Naive thymus-derived CD4-positive, alpha-beta T cell (primary cell): ENCODE measurements at regions of chr1 and their contacts with region 1.

Region 1: GRCh38 chr1:203649999-203650855 is 23.6 kb downstream of the ATP2B4 start:
- DNase-seq: peak; percentile 24 to 63 (median 32)
- ATAC-seq: peak; percentile 66
- H3K4me3 ChIP-seq: peak overlapping the region; percentile 47
- H3K4me3 Mint-ChIP-seq: peak overlapping the region; percentile 73 to 92 (median 82)
- H3K27ac ChIP-seq: peak overlapping the region; percentile 70
- H3K27ac Mint-ChIP-seq: peak overlapping the region; percentile 79 to 94 (median 91)
- H3K4me1 ChIP-seq: peaks cover 51 to 72% of the 10 kb centered on the region in 2 donors
- H3K4me1 Mint-ChIP-seq: peaks cover 39 to 78% (median 68%) of the 10 kb centered on the region in 7 donors
- H3K27me3 ChIP-seq: no peaks in the 10 kb centered on the region
- H3K27me3 Mint-ChIP-seq: no peaks in the 10 kb centered on the region

Region 2: GRCh38 chr1:203290261-203291089 is 359.8 kb before region 1 on chr1:
- CTCF ChIA-PET with region 1: interaction called, 3 read pairs
- POLR2A ChIA-PET with region 1: no interaction called
- intact Hi-C with region 1: loop called in 1 of 2 experiments (anchors 5 kb)
- DNase-seq: peak; percentile 95 to 98 (median 97)
- ATAC-seq: peak; percentile 76
- H3K4me3 ChIP-seq: peak overlapping the region; percentile 57
- H3K4me3 Mint-ChIP-seq: peak overlapping the region; percentile 75 to 89 (median 86)
- H3K27ac ChIP-seq: peak overlapping the region; percentile 98
- H3K27ac Mint-ChIP-seq: peak overlapping the region; percentile 97 to 100 (median 99)
- H3K4me1 ChIP-seq: peaks cover 54 to 58% of the 10 kb centered on the region in 2 donors
- H3K4me1 Mint-ChIP-seq: peaks cover 44 to 92% (median 86%) of the 10 kb centered on the region in 7 donors
- H3K27me3 ChIP-seq: no peaks in the 10 kb centered on the region
- H3K27me3 Mint-ChIP-seq: peaks cover 0 to 3% (median 0%) of the 10 kb centered on the region in 5 donors

Region 3: GRCh38 chr1:203390298-203390697 is 259.9 kb before region 1 on chr1:
- CTCF ChIA-PET with region 1: no interaction called
- POLR2A ChIA-PET with region 1: no interaction called
- intact Hi-C with region 1: no loop called
- DNase-seq: no peak
- ATAC-seq: no peak
- H3K4me3 ChIP-seq: no peak overlapping the region
- H3K4me3 Mint-ChIP-seq: no peak overlapping the region
- H3K27ac ChIP-seq: no peak overlapping the region
- H3K27ac Mint-ChIP-seq: no peak overlapping the region
- H3K4me1 ChIP-seq: no peaks in the 10 kb centered on the region
- H3K4me1 Mint-ChIP-seq: peaks cover 0 to 2% (median 0%) of the 10 kb centered on the region in 7 donors
- H3K27me3 ChIP-seq: no peaks in the 10 kb centered on the region
- H3K27me3 Mint-ChIP-seq: peaks cover 15 to 54% (median 32%) of the 10 kb centered on the region in 5 donors

Region 4: DNA sequence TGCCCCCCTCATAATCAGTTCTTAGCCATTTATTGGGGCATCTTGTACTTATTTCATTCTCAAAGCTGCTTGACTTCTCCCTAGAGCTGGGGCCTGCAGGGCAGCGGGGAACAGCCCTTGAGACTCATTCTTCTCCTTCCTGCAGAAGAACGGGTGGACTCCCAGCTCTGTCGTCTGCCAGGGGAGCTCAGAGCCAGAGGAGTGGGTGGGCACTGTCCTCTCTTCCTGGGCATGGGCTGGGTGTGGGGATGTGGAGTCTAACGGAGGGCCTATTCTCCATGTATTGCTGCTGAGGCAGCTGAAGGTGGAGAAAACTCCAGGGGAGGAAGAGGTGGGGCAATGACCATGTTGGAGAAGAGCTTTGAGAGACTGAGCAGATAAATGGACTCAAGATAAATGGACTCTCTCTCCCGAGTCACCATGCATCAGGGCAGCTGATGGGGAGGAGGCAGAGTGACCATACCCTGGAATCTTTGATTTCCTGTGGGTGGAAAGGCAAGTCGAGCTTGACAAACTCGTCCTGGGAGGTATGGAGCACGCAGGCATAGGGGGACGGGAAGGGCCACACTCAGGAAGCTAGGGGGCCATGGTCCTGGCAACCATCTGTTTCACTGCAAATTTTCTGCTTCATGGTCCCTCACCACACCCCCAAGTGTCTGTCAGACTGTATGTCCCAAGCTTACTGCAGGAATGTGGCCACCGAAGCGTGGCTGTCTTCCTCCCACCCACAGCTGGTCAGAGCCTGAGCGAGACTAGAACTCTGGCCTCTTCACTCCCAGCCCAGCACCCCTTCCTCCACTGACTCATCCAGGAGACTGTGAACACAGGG is 80.5 kb before region 1 on chr1:
- CTCF ChIA-PET with region 1: no interaction called
- POLR2A ChIA-PET with region 1: no interaction called
- intact Hi-C with region 1: no loop called
- DNase-seq: no peak
- ATAC-seq: no peak
- H3K4me3 ChIP-seq: no peak overlapping the region
- H3K4me3 Mint-ChIP-seq: no peak overlapping the region
- H3K27ac ChIP-seq: no peak overlapping the region
- H3K27ac Mint-ChIP-seq: no peak overlapping the region
- H3K4me1 ChIP-seq: no peaks in the 10 kb centered on the region
- H3K4me1 Mint-ChIP-seq: no peaks in the 10 kb centered on the region
- H3K27me3 ChIP-seq: no peaks in the 10 kb centered on the region
- H3K27me3 Mint-ChIP-seq: peaks cover 0 to 11% (median 0%) of the 10 kb centered on the region in 5 donors

Region 5: DNA sequence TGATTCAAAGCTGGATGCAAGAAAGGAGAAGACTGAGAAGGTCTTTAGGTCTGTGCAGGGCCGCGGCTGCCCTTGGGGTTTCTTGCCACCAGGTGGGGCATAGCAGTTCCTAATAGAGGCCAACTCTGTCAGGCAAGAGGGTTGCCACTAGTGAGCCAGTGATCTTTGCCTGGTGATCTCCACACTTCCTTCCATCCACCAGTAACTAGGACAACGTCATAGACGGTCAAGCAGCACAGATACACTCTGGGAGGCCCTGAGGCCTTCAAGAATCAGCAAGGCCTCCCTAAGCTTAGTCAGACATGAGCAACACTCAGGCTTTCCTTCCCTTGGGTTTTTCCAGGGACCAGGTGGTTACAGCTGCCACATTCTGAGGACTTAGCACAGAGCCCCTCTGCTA is 56.5 kb before region 1 on chr1:
- CTCF ChIA-PET with region 1: no interaction called
- POLR2A ChIA-PET with region 1: no interaction called
- intact Hi-C with region 1: no loop called
- DNase-seq: peak in 7 of 9 donors; percentile 17 to 42 (median 25)
- ATAC-seq: peak; percentile 79
- H3K4me3 ChIP-seq: no peak overlapping the region
- H3K4me3 Mint-ChIP-seq: no peak overlapping the region
- H3K27ac ChIP-seq: no peak overlapping the region
- H3K27ac Mint-ChIP-seq: peak overlapping the region in 4 of 9 donors; percentile 20 to 70 (median 50)
- H3K4me1 ChIP-seq: no peaks in the 10 kb centered on the region
- H3K4me1 Mint-ChIP-seq: peaks cover 0 to 32% (median 7%) of the 10 kb centered on the region in 7 donors
- H3K27me3 ChIP-seq: no peaks in the 10 kb centered on the region
- H3K27me3 Mint-ChIP-seq: peaks cover 0 to 4% (median 0%) of the 10 kb centered on the region in 5 donors

Region 6: GRCh38 chr1:203663294-203663693 is 13.1 kb after region 1 on chr1:
- CTCF ChIA-PET with region 1: interaction called, 3 read pairs
- POLR2A ChIA-PET with region 1: interaction called, 4 read pairs
- intact Hi-C with region 1: loop called in 1 of 2 experiments (anchors 1 kb)
- DNase-seq: no peak
- ATAC-seq: peak; percentile 49
- H3K4me3 ChIP-seq: no peak overlapping the region
- H3K4me3 Mint-ChIP-seq: peak overlapping the region in 5 of 10 donors; percentile 4 to 69 (median 28)
- H3K27ac ChIP-seq: no peak overlapping the region
- H3K27ac Mint-ChIP-seq: peak overlapping the region; percentile 20 to 83 (median 66)
- H3K4me1 ChIP-seq: peaks cover 15 to 44% of the 10 kb centered on the region in 2 donors
- H3K4me1 Mint-ChIP-seq: peaks cover 36 to 62% (median 48%) of the 10 kb centered on the region in 7 donors
- H3K27me3 ChIP-seq: no peaks in the 10 kb centered on the region
- H3K27me3 Mint-ChIP-seq: no peaks in the 10 kb centered on the region

Region 7: GRCh38 chr1:203673550-203674427 is 23.6 kb after region 1 on chr1:
- CTCF ChIA-PET with region 1: interaction called, 7 read pairs
- POLR2A ChIA-PET with region 1: interaction called, 11 read pairs
- intact Hi-C with region 1: loop called (anchors 1 kb)
- DNase-seq: peak; percentile 27 to 79 (median 73)
- ATAC-seq: peak; percentile 91
- H3K4me3 ChIP-seq: no peak overlapping the region
- H3K4me3 Mint-ChIP-seq: peak overlapping the region; percentile 57 to 87 (median 77)
- H3K27ac ChIP-seq: peak overlapping the region; percentile 53
- H3K27ac Mint-ChIP-seq: peak overlapping the region; percentile 87 to 99 (median 95)
- H3K4me1 ChIP-seq: peaks cover 52 to 54% of the 10 kb centered on the region in 2 donors
- H3K4me1 Mint-ChIP-seq: peaks cover 50 to 81% (median 71%) of the 10 kb centered on the region in 7 donors
- H3K27me3 ChIP-seq: no peaks in the 10 kb centered on the region
- H3K27me3 Mint-ChIP-seq: no peaks in the 10 kb centered on the region

Region 8: DNA sequence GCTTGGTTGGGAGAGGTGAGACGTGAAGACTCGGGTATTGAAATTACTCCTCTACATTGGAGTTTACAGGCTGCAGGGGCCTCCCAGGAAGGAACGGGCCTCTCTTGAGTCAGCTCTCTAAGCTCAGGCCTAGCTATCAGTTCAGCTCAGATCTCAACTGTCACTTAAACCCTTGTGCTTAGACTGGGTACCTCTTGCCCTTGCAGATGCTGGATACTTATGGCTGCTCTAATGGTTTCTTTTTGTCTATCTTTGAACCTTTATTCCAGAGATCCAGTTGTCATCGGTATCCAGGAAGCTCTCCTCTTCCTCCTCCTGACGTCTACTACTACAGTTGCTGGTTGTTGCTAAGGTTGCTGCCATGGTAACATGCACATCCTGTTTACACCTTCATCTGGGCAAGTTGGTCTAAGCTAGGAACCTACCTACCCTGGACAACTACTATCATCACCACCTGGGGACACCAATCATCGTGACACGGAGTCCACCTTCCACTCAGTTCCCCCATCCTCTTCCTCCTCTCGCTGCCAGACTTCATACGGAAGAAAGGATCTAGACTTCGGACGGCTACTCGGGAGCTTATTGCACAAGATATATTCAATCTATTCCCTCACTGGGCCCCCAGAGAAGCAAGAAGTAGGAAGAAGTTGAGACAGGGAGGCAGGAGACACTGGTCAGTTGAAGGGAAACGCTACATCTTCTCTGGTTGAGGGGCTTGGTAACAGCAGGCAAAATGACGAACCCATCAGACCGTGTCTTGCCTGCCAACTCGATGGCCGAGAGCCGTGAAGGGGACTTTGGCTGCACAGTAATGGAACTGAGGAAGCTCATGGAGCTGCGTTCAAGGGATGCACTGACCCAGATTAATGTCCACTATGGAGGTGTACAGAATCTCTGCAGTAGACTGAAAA is 32.5 kb after region 1 on chr1:
- CTCF ChIA-PET with region 1: interaction called, 4 read pairs
- POLR2A ChIA-PET with region 1: interaction called, 4 read pairs
- intact Hi-C with region 1: loop called in 1 of 2 experiments (anchors 1 kb)
- DNase-seq: peak; percentile 26 to 89 (median 80)
- ATAC-seq: peak; percentile 97
- H3K4me3 ChIP-seq: no peak overlapping the region
- H3K4me3 Mint-ChIP-seq: peak overlapping the region; percentile 19 to 72 (median 54)
- H3K27ac ChIP-seq: peak overlapping the region; percentile 67
- H3K27ac Mint-ChIP-seq: peak overlapping the region; percentile 82 to 96 (median 95)
- H3K4me1 ChIP-seq: peaks cover 24 to 26% of the 10 kb centered on the region in 2 donors
- H3K4me1 Mint-ChIP-seq: peaks cover 32 to 57% (median 51%) of the 10 kb centered on the region in 7 donors
- H3K27me3 ChIP-seq: no peaks in the 10 kb centered on the region
- H3K27me3 Mint-ChIP-seq: no peaks in the 10 kb centered on the region

Region 9: GRCh38 chr1:203726417-203726867 is 76.2 kb after region 1 on chr1:
- CTCF ChIA-PET with region 1: no interaction called
- POLR2A ChIA-PET with region 1: no interaction called
- intact Hi-C with region 1: no loop called
- DNase-seq: no peak
- ATAC-seq: no peak
- H3K4me3 ChIP-seq: no peak overlapping the region
- H3K4me3 Mint-ChIP-seq: no peak overlapping the region
- H3K27ac ChIP-seq: no peak overlapping the region
- H3K27ac Mint-ChIP-seq: peak overlapping the region in 3 of 9 donors; percentile 3 to 73 (median 62)
- H3K4me1 ChIP-seq: no peaks in the 10 kb centered on the region
- H3K4me1 Mint-ChIP-seq: peaks cover 0 to 6% (median 0%) of the 10 kb centered on the region in 7 donors
- H3K27me3 ChIP-seq: no peaks in the 10 kb centered on the region
- H3K27me3 Mint-ChIP-seq: no peaks in the 10 kb centered on the region